Calu3 (cell line): ENCODE measurements at regions of chr11 and their contacts with region 1.

Region 1: GRCh38 chr11:26276798-26277424 is 55.0 kb upstream of the ANO3 start:
- DNase-seq: peak; percentile 63
- H3K4me3 Mint-ChIP-seq: no peak overlapping the region
- H3K27ac Mint-ChIP-seq: no peak overlapping the region
- H3K4me1 Mint-ChIP-seq: peaks cover 7% of the 10 kb centered on the region
- H3K27me3 Mint-ChIP-seq: no peaks in the 10 kb centered on the region
- CTCF ChIP-seq: peak; percentile 92

Region 2: GRCh38 chr11:25602149-25602548 is 674.8 kb before region 1 on chr11:
- CTCF ChIA-PET with region 1: no interaction called
- intact Hi-C with region 1: no loop called
- DNase-seq: no peak
- H3K4me3 Mint-ChIP-seq: no peak overlapping the region
- H3K27ac Mint-ChIP-seq: no peak overlapping the region
- H3K4me1 Mint-ChIP-seq: no peaks in the 10 kb centered on the region
- H3K27me3 Mint-ChIP-seq: no peaks in the 10 kb centered on the region
- CTCF ChIP-seq: no peak

Region 3: DNA sequence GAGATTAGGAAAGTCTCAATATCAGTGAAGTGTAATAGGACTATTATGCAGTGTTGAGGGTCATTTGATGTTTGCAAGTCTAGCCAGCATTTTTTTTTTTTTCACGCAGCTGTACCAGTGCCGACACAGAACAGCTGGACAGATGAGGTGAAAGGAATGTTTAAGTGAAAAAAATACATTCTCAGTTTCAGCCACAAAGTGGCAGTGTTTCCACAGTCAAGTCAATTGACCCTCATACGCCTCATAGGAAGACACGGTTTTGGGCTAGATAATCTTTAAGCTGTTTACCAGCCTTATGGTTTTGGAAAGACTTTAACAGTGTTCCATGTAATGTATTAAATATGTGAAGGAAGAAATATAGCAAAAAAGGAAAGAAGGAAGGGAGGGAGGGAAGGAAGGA is 294.9 kb before region 1 on chr11:
- CTCF ChIA-PET with region 1: interaction called, 6 read pairs
- intact Hi-C with region 1: loop called (anchors 1 kb)
- DNase-seq: peak; percentile 43
- H3K4me3 Mint-ChIP-seq: no peak overlapping the region
- H3K27ac Mint-ChIP-seq: peak overlapping the region; percentile 16
- H3K4me1 Mint-ChIP-seq: peaks cover 33% of the 10 kb centered on the region
- H3K27me3 Mint-ChIP-seq: no peaks in the 10 kb centered on the region
- CTCF ChIP-seq: peak; percentile 53

Region 4: GRCh38 chr11:26134481-26135355 is 142.2 kb before region 1 on chr11:
- CTCF ChIA-PET with region 1: no interaction called
- intact Hi-C with region 1: loop called (anchors 2 kb)
- DNase-seq: peak; percentile 23
- H3K4me3 Mint-ChIP-seq: no peak overlapping the region
- H3K27ac Mint-ChIP-seq: no peak overlapping the region
- H3K4me1 Mint-ChIP-seq: peaks cover 8% of the 10 kb centered on the region
- H3K27me3 Mint-ChIP-seq: no peaks in the 10 kb centered on the region
- CTCF ChIP-seq: no peak

Region 5: GRCh38 chr11:26234456-26234855 is 42.5 kb before region 1 on chr11:
- CTCF ChIA-PET with region 1: no interaction called
- intact Hi-C with region 1: loop called (anchors 2 kb)
- DNase-seq: no peak
- H3K4me3 Mint-ChIP-seq: no peak overlapping the region
- H3K27ac Mint-ChIP-seq: no peak overlapping the region
- H3K4me1 Mint-ChIP-seq: peaks cover 14% of the 10 kb centered on the region
- H3K27me3 Mint-ChIP-seq: no peaks in the 10 kb centered on the region
- CTCF ChIP-seq: no peak

Region 6: DNA sequence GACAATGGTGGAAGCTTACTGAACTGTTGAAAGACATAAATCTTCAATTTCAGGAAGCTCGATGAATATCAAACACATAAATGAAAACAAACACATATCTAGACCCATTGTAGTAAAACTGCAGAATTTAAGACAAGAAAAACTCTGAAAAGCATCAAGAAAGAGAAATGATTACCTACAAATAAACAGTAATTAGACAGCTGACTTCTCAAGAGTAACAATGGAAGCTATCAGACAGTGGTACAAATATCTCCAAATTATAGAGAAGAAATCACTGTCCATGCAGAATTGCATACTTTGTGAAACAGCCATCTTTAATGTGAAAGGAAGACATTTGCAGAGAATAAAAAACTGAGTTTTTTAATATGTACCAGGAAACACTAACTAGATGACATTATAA is 100.7 kb after region 1 on chr11:
- CTCF ChIA-PET with region 1: no interaction called
- intact Hi-C with region 1: no loop called
- DNase-seq: no peak
- H3K4me3 Mint-ChIP-seq: no peak overlapping the region
- H3K27ac Mint-ChIP-seq: no peak overlapping the region
- H3K4me1 Mint-ChIP-seq: no peaks in the 10 kb centered on the region
- H3K27me3 Mint-ChIP-seq: no peaks in the 10 kb centered on the region
- CTCF ChIP-seq: no peak